Colonic mucosa (tissue), 4 donors: ENCODE measurements at regions of chr17 and their contacts with region 1.

Region 1: DNA sequence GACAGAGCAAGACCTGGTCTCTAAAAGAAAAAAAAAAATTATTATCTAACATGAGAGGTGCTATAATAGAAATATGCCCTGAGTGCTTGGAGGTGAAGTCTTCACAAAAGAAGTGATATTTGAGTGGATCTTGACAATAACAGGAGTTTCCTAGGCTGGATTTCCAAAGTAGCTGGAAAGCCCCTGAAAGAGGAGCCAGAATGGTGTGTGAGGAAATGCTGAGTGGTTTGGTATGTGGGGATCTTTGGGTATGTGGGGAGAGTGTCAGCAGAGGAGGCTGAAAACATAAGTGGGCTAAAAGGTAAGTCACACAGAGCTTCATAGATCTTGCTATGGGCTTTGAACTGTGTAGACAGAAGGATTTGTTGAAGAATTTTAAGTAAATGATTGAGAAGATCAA is 100.1 kb downstream of the YPEL2 start:
- DNase-seq: no peak
- H3K4me3 ChIP-seq: no peak overlapping the region
- H3K27ac ChIP-seq: no peak overlapping the region
- H3K4me1 ChIP-seq: no peaks in the 10 kb centered on the region
- H3K27me3 ChIP-seq: no peaks in the 10 kb centered on the region
- CTCF ChIP-seq: no peak

Region 2: DNA sequence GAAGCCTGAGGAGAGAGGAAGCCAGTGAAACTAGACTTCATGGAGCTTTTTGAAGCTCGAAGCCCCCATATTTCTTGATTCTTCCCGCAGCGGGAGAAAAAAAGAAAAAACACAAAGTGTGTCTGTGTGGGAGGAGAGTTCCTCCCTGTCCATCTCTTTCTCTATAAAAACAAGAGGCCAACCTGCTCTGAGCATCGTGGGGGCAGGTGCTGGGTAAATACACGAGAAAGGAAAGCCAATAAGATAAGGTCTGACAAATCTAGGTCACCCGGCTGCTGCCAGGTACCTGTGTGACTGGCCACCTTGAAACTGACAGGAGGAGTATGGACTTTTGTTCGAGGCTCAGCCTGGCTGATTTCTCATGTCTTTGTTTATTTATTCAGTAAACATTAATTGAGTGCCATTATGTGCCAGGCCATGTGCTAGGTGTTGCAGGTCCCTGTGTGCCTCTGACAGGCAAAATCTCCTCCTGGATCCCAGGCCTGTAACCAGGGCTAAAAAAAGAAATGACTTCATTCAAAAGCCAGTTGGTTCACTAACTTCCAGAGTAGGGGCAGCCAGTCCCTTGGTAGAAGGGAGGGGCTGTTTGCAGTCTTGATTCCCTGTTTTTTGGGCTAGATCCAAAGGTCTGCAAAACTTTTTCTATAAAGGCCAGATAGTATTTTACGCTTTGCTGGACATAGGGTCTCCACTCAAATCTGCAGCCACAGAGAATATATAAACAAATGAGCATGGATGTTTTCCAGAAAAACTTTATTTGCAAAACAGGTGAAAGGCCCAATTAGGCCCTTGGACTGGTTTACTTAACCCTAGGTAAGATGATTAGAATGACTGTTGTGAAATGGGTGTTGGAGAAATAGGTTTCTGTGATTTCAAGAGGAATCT is 64.6 kb before region 1 on chr17:
- intact Hi-C with region 1: loop called (anchors 5 kb)
- DNase-seq: peak; percentile 88
- H3K4me3 ChIP-seq: no peak overlapping the region
- H3K27ac ChIP-seq: peak overlapping the region; percentile 78
- H3K4me1 ChIP-seq: peaks cover 64% of the 10 kb centered on the region
- H3K27me3 ChIP-seq: no peaks in the 10 kb centered on the region
- CTCF ChIP-seq: no peak

Region 3: GRCh38 chr17:59547131-59547915 is 115.7 kb after region 1 on chr17:
- intact Hi-C with region 1: no loop called
- DNase-seq: no peak
- H3K4me3 ChIP-seq: no peak overlapping the region
- H3K27ac ChIP-seq: no peak overlapping the region
- H3K4me1 ChIP-seq: no peaks in the 10 kb centered on the region
- H3K27me3 ChIP-seq: no peaks in the 10 kb centered on the region
- CTCF ChIP-seq: no peak